Naive thymus-derived CD8-positive, alpha-beta T cell (primary cell): ENCODE measurements at regions of chr22 and their contacts with region 1.

Region 1: GRCh38 chr22:49930739-49931412 is 12.4 kb downstream of the CRELD2 start:
- DNase-seq: peak in 3 of 10 donors; percentile 18 to 40 (median 34)
- ATAC-seq: peak in 1 of 2 donors; percentile 6
- H3K4me3 Mint-ChIP-seq: peak overlapping the region in 9 of 10 donors; percentile 13 to 49 (median 33)
- H3K27ac Mint-ChIP-seq: peak overlapping the region; percentile 50 to 88 (median 78)
- H3K4me1 Mint-ChIP-seq: peaks cover 8 to 45% (median 38%) of the 10 kb centered on the region in 4 donors
- H3K27me3 Mint-ChIP-seq: no peaks in the 10 kb centered on the region

Region 2: DNA sequence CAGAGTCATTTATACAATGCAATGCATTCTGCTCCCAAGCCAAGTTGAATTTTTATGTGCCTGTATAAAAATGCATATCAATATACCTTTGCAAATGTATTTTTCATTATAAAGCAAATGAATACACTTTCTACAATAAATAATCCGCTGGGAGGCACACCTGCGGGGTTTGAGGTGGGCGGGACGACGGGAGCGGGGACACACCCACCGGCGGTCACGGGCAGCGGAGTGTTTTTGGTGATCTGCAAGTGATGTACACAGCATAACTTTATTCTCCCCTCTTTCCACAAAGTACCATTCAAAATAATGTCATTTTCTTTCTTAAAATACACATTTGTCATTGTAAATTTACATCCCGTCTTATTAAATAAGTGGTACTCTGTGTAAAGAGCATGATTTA is 157.3 kb before region 1 on chr22:
- POLR2A ChIA-PET with region 1: no interaction called
- DNase-seq: peak in 1 of 10 donors; percentile 27
- ATAC-seq: no peak
- H3K4me3 Mint-ChIP-seq: no peak overlapping the region
- H3K27ac Mint-ChIP-seq: peak overlapping the region in 3 of 10 donors; percentile 58 to 85 (median 60)
- H3K4me1 Mint-ChIP-seq: peaks cover 5 to 29% (median 18%) of the 10 kb centered on the region in 4 donors
- H3K27me3 Mint-ChIP-seq: no peaks in the 10 kb centered on the region

Region 3: GRCh38 chr22:49992921-49993648 is 62.2 kb after region 1 on chr22:
- POLR2A ChIA-PET with region 1: interaction called, 10 read pairs
- DNase-seq: peak; percentile 40 to 82 (median 56)
- ATAC-seq: peak; percentile 94 to 99
- H3K4me3 Mint-ChIP-seq: peak overlapping the region in 1 of 10 donors; percentile 36
- H3K27ac Mint-ChIP-seq: peak overlapping the region in 4 of 10 donors; percentile 24 to 50 (median 43)
- H3K4me1 Mint-ChIP-seq: peaks cover 4 to 8% (median 6%) of the 10 kb centered on the region in 4 donors
- H3K27me3 Mint-ChIP-seq: peaks cover 0 to 2% (median 0%) of the 10 kb centered on the region in 5 donors